Heart right ventricle (tissue), 16 donors: ENCODE measurements at regions of chr2 and their contacts with region 1.

Region 1: DNA sequence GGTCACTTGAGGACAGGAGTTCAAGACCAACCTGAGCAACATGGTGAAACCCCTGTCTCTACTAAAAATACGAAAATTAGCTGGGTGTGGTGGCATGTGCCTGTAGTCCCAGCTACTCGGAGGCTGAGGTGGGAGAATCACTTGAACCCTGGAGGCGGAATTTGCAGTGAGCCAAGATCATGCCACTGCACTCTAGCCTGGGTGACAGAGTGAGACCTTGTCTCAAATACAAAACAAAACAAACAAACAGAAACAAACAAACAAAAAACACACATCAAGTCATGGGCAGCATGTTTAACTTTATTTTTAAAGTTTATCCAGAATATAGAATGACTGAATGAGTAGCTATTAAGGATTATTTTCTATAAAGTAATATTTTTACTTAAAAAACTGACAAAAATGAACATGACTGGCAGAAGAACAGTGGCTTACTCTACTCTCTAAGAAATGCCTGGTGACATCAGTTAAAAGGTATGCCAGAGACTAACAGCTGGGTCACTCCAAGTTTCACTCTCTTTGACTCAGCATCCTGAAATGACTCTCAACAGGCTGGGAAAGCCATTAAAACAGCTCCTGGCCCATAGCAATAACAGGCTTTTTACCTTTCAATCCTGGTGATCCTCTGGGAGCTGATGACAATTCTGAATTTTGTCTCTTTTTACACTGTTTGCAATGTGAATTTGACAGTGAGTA is 281.6 kb upstream of the STON1 start:
- DNase-seq: peak in 1 of 2 donors; percentile 56
- ATAC-seq: peak; percentile 76 to 98 (median 96)
- H3K4me3 ChIP-seq: peak overlapping the region in 2 of 10 donors; percentile 6 to 13
- H3K27ac ChIP-seq: peak overlapping the region in 9 of 10 donors; percentile 33 to 90 (median 75)
- H3K4me1 ChIP-seq: peaks cover 8 to 46% (median 28%) of the 10 kb centered on the region in 9 donors
- H3K27me3 ChIP-seq: no peaks in the 10 kb centered on the region
- CTCF ChIP-seq: no peak

Region 2: DNA sequence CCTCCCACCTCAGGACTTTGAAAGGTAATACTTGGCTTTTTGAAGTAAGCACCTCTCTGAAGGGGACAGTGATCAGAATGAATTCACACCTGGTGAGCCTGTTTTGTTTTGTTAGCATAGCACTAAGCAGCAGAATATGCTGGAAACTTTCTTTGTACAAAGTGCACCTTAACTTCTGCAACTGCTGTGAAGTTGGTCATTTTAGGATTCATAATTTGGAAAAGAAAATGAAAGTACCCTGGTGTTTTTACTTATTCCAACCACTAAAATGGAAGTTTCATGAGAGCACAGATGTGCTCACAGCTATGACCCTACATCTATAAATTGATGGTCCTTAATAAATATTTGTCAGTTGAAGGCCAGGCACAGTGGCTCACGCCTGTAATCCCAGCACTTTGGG is 23.8 kb after region 1 on chr2:
- intact Hi-C with region 1: no loop called
- DNase-seq: no peak
- ATAC-seq: no peak
- H3K4me3 ChIP-seq: no peak overlapping the region
- H3K27ac ChIP-seq: no peak overlapping the region
- H3K4me1 ChIP-seq: no peaks in the 10 kb centered on the region
- H3K27me3 ChIP-seq: no peaks in the 10 kb centered on the region
- CTCF ChIP-seq: no peak

Region 3: GRCh38 chr2:48306409-48307284 is 58.3 kb after region 1 on chr2:
- intact Hi-C with region 1: loop called in 1 of 10 experiments (anchors 5 kb)
- DNase-seq: no peak
- ATAC-seq: peak in 7 of 8 donors; percentile 25 to 66 (median 47)
- H3K4me3 ChIP-seq: no peak overlapping the region
- H3K27ac ChIP-seq: peak overlapping the region in 6 of 10 donors; percentile 0 to 39 (median 26)
- H3K4me1 ChIP-seq: peaks cover 0 to 21% (median 0%) of the 10 kb centered on the region in 9 donors
- H3K27me3 ChIP-seq: no peaks in the 10 kb centered on the region
- CTCF ChIP-seq: no peak

Region 4: GRCh38 chr2:48414980-48415835 is 166.8 kb after region 1 on chr2:
- intact Hi-C with region 1: loop called in 1 of 10 experiments (anchors 10 kb)
- DNase-seq: no peak
- ATAC-seq: peak; percentile 21 to 55 (median 46)
- H3K4me3 ChIP-seq: peak overlapping the region in 1 of 10 donors; percentile 9
- H3K27ac ChIP-seq: peak overlapping the region in 5 of 10 donors; percentile 18 to 60 (median 35)
- H3K4me1 ChIP-seq: peaks cover 13 to 56% (median 33%) of the 10 kb centered on the region in 9 donors
- H3K27me3 ChIP-seq: no peaks in the 10 kb centered on the region
- CTCF ChIP-seq: no peak

Region 5: DNA sequence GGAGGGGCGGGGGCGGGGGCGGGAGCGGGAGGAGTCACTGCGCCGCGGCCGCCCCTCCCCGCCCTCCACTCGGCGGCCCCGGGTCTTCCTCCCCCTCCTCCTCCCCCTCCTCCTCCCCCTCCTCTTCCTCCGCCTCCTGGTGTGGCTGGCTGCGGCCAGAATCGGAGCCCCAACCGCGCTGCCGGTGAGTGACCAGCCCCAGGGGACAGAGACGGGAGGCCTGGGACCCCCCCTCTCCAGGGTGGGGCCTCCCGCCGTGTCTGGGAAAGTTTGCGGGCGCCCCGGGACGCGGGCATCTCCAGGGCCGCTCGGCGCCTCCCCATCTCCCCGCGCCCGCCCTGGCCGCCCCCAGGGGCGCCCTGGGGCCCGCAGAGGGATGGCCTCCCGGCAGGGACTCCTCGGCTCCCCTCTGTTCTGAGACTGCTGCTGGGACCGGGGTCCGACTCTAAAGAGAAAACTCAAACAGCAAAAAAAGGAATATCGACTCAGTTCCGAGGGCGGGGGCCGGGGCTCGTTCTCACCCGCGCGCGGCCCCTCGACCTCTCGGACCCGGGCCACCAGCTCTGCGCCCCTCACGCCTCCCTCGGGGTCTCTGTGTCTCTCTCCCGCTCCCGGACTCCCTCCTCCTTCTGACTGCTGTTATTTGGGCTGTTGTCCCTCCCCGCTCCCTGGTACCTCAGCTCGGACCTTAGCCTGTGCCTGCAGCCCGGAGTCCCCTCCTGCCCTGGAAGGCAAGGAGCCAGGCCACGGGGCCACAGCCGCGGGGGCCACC is 281.8 kb after region 1 on chr2 and contains the start of gene STON1:
- intact Hi-C with region 1: loop called in 1 of 10 experiments (anchors 5 kb)
- DNase-seq: peak; percentile 64 to 73
- ATAC-seq: peak; percentile 56 to 81 (median 69)
- H3K4me3 ChIP-seq: peak within 1 kb of the TSS; percentile 76 to 98 (median 90)
- H3K27ac ChIP-seq: peak within 1 kb of the TSS; percentile 73 to 93 (median 84)
- H3K4me1 ChIP-seq: peaks cover 7 to 56% (median 23%) of the 10 kb centered on the region in 9 donors
- H3K27me3 ChIP-seq: peaks cover 0 to 6% (median 0%) of the 10 kb centered on the region in 7 donors
- CTCF ChIP-seq: peak in 4 of 9 donors; percentile 7 to 26 (median 25)
- total RNA-seq, gene STON1: 2.8 to 8.9 (median 4.5) TPM

Region 6: GRCh38 chr2:48715042-48715899 is 466.9 kb after region 1 on chr2:
- intact Hi-C with region 1: no loop called
- DNase-seq: peak; percentile 6 to 21
- ATAC-seq: no peak
- H3K4me3 ChIP-seq: no peak overlapping the region
- H3K27ac ChIP-seq: no peak overlapping the region
- H3K4me1 ChIP-seq: peaks cover 0 to 18% (median 0%) of the 10 kb centered on the region in 9 donors
- H3K27me3 ChIP-seq: no peaks in the 10 kb centered on the region
- CTCF ChIP-seq: no peak